K562 (cell line): ENCODE measurements at regions of chr10 and their contacts with region 1.

Region 1: DNA sequence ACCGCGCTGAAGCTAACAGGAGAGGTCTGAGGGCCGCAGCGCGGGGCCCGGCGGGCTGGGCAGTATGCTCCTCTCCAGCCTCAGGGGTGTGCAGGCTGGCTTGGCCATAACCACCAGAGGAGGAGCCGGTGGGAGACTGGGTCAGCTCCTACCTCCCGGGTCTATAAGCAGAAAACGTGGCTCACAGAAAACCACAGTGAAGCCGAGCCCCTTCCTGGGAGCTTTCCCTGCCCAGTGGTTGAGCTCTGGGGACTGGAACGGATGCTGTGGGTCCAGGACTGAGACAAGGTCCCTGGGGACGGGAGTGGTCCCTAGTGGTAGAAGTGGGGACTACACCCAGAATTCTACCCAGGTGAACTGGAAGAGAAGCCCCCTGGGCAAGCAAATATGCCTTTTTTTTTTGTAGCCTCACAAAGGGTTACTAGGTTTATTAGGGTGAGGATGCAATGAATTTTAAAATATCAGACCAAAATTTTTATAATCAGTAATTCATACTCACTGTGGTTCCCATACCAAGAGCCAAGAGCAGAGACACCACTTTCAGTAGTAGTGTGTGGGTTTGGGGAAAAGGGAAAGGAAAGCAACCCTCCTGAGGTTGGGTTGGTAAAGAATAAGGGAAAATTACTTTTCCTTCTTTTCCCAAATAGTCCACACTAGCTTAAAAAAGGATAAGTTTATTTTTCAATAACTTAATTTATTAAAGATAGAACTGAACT is 67.9 kb upstream of the PRKCQ start:
- DNase-seq: peak; percentile 69 to 75 (median 73)
- ATAC-seq: peak; percentile 98
- H3K4me3 ChIP-seq: no peak overlapping the region
- H3K27ac ChIP-seq: no peak overlapping the region
- H3K4me1 ChIP-seq: peaks cover 0 to 3% of the 10 kb centered on the region in 2 experiments; a peak in 1 of 5 replicates
- H3K27me3 ChIP-seq: peaks cover 8 to 14% of the 10 kb centered on the region in 2 experiments
- CTCF ChIP-seq: peak; percentile 74 to 85 (median 78)
- EP300 ChIP-seq: no peak
- POLR2A ChIP-seq: no peak
- RAD21 ChIP-seq: peak; percentile 53 to 73

Region 2: GRCh38 chr10:6416892-6417512 is 231.0 kb before region 1 on chr10:
- CTCF ChIA-PET with region 1: no interaction called
- POLR2A ChIA-PET with region 1: no interaction called
- in situ Hi-C with region 1: no loop called
- intact Hi-C with region 1: loop called (anchors 5 kb)
- DNase-seq: peak; percentile 44 to 69 (median 52)
- ATAC-seq: peak; percentile 88
- H3K4me3 ChIP-seq: no peak overlapping the region
- H3K27ac ChIP-seq: no peak overlapping the region
- H3K4me1 ChIP-seq: no peaks in the 10 kb centered on the region
- H3K27me3 ChIP-seq: peaks cover 2 to 13% of the 10 kb centered on the region in 2 experiments; a peak in 1 of 5 replicates
- CTCF ChIP-seq: peak; percentile 54 to 91 (median 67); a peak in 5 of 6 replicates
- EP300 ChIP-seq: no peak
- POLR2A ChIP-seq: no peak
- RAD21 ChIP-seq: peak; percentile 94 to 98

Region 3: GRCh38 chr10:6445501-6446316 is 202.3 kb before region 1 on chr10:
- CTCF ChIA-PET with region 1: interaction called, 4 read pairs
- POLR2A ChIA-PET with region 1: no interaction called
- in situ Hi-C with region 1: no loop called
- intact Hi-C with region 1: loop called (anchors 1 kb)
- DNase-seq: peak; percentile 54 to 76 (median 58)
- ATAC-seq: peak; percentile 91
- H3K4me3 ChIP-seq: no peak overlapping the region
- H3K27ac ChIP-seq: peak overlapping the region; percentile 61; the same call in 2 of the 3 replicates
- H3K4me1 ChIP-seq: peaks cover 0 to 4% of the 10 kb centered on the region in 2 experiments; a peak in 2 of 5 replicates
- H3K27me3 ChIP-seq: no peaks in the 10 kb centered on the region
- CTCF ChIP-seq: peak; percentile 74 to 84 (median 81)
- EP300 ChIP-seq: no peak
- POLR2A ChIP-seq: no peak
- RAD21 ChIP-seq: peak; percentile 76 to 89

Region 4: DNA sequence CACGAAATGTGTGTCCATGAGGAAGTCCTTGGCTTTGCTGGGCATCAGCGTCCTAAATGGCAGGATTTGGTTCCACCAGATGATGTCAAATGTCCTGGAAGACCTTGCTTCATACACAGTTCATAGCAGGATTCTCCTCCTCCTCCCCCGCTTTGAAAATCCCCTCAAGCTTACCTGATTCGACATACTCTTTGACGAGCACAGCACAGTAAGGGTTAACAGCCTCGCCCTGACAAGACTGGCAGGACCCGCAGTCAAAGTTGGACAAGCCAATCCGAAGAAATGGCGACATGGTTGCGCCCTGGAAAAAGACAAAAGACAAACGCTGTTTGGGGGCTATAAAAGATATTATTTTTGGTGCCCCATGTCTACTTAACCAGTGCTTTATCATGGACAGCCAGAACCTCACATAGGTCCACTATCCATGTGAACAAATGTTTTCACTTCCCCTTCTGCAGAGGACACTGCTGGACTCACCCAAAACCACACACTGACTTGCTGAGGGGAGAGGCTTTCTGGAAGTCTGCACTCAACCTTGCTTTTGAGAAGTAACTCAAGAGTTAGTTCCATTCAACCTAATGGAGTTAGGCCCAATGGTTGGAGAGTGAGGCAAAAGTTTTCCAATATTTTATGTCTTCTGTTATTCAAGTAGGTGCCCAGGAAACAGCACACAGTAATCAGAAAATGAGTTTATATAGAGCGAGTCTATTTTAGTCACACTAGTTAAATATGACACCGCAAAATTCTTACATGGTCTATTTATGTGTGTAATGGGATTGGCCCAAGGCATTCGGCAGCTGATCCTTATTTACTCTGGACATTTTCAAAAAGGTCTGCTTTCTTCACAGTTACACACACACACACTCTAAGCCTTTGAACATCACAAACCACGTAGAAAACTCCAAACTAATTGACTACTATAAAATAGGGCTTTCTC is 132.9 kb before region 1 on chr10:
- CTCF ChIA-PET with region 1: no interaction called
- POLR2A ChIA-PET with region 1: no interaction called
- in situ Hi-C with region 1: no loop called
- intact Hi-C with region 1: loop called (anchors 5 kb)
- DNase-seq: peak in 2 of 4 experiments; percentile 56 to 66
- ATAC-seq: peak; percentile 85
- H3K4me3 ChIP-seq: no peak overlapping the region
- H3K27ac ChIP-seq: peak overlapping the region; percentile 70
- H3K4me1 ChIP-seq: peaks cover 0 to 21% of the 10 kb centered on the region in 2 experiments; a peak in 4 of 5 replicates
- H3K27me3 ChIP-seq: no peaks in the 10 kb centered on the region; a peak in 1 of 5 replicates
- CTCF ChIP-seq: no peak
- EP300 ChIP-seq: peak; percentile 6; the same call in 1 of the 2 replicates
- POLR2A ChIP-seq: no peak
- RAD21 ChIP-seq: no peak; a peak in 1 of 4 replicates

Region 5: GRCh38 chr10:6580279-6581029 is 67.5 kb before region 1 on chr10:
- CTCF ChIA-PET with region 1: no interaction called
- POLR2A ChIA-PET with region 1: no interaction called
- in situ Hi-C with region 1: no loop called
- intact Hi-C with region 1: loop called (anchors 5 kb)
- DNase-seq: peak; percentile 84 to 92 (median 90)
- ATAC-seq: peak; percentile 86
- H3K4me3 ChIP-seq: peak overlapping the region; percentile 84
- H3K27ac ChIP-seq: peak overlapping the region; percentile 86
- H3K4me1 ChIP-seq: peaks cover 18 to 26% of the 10 kb centered on the region in 2 experiments
- H3K27me3 ChIP-seq: no peaks in the 10 kb centered on the region
- CTCF ChIP-seq: peak in 2 of 3 experiments; percentile 57 to 74; a peak in 4 of 6 replicates
- EP300 ChIP-seq: no peak
- POLR2A ChIP-seq: peak; percentile 90
- RAD21 ChIP-seq: peak; percentile 29 to 43